Upper lobe of right lung (tissue), 1 donor: ENCODE measurements at regions of chr10 and their contacts with region 1.

Region 1: DNA sequence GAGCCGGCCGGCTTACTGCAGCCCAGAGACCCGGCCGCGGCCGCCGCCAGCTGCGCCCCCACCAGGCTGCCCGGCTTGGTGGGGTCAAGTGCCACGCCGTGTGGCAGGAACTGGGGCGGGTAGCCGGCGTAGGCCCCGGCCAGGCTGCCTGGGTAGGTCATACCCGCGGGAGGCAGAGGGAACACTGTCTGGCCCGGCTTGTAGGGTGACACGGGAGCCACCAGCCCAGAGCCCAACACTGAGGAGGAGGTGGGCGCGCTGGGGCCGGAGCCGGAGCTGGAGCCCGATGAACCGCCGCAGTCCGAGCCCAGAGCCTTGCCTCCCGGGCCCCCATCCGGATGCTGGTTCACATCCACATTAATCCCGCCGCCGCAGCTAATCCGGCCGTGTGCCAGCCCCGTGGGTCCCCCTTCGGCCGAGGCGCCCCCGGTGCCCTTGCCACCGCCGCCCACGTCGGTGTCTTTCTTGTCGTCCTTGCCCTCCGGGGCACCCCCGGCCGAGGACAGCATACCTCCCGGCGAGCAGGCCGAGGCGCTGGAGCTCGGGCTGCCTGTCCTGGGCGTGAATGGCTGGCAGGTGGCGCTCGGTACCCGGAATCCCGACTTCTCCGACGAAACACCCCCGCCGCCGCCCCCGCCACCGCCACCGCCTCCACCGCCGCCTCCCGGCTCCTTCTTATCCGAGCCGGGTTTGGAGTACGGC is 2.0 kb downstream of the ZNF503 start:
- DNase-seq: peak; percentile 92
- ATAC-seq: peak; percentile 28
- H3K4me3 ChIP-seq: peak overlapping the region; percentile 81
- H3K27ac ChIP-seq: peak overlapping the region; percentile 96
- H3K4me1 ChIP-seq: peaks cover 17% of the 10 kb centered on the region
- H3K27me3 ChIP-seq: peaks cover 15% of the 10 kb centered on the region
- CTCF ChIP-seq: peak; percentile 60

Region 2: GRCh38 chr10:75294866-75295701 is 104.5 kb before region 1 on chr10:
- intact Hi-C with region 1: loop called (anchors 10 kb)
- DNase-seq: peak; percentile 87
- ATAC-seq: peak; percentile 89
- H3K4me3 ChIP-seq: peak overlapping the region; percentile 62
- H3K27ac ChIP-seq: peak overlapping the region; percentile 94
- H3K4me1 ChIP-seq: peaks cover 29% of the 10 kb centered on the region
- H3K27me3 ChIP-seq: no peaks in the 10 kb centered on the region
- CTCF ChIP-seq: peak; percentile 34

Region 3: GRCh38 chr10:76036111-76036940 is 636.7 kb after region 1 on chr10:
- intact Hi-C with region 1: loop called (anchors 5 kb)
- DNase-seq: peak; percentile 85
- ATAC-seq: peak; percentile 94
- H3K4me3 ChIP-seq: peak overlapping the region; percentile 14
- H3K27ac ChIP-seq: no peak overlapping the region
- H3K4me1 ChIP-seq: peaks cover 22% of the 10 kb centered on the region
- H3K27me3 ChIP-seq: no peaks in the 10 kb centered on the region
- CTCF ChIP-seq: peak; percentile 93